ENCODE measurements at regions of chr14 and their contacts with region 1.

Region 1: DNA sequence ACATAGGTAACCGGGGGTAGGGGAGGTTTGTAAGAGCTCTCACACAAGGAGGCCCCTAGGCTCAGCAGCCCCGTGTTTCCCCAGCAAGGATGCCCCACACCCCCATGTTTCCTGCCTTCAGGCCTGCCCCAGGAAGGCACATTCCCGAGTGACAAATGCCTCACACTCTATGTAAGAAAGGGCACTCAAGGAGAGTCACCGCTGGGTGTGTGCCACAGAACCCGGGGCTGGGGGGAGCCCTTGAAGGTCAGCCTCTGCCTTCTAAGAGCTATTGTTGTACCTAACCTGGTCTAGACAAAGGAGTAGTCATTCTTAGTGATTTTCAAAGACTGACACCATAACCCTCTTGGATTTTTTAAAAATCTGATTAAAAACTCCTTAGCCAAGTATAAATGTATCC is 333.6 kb downstream of the DPF3 start:
- DNase-seq: no peak
- ATAC-seq: no peak
- H3K4me3 Mint-ChIP-seq: no peak overlapping the region
- H3K27ac Mint-ChIP-seq: no peak overlapping the region
- H3K4me1 Mint-ChIP-seq: peaks cover 37% of the 10 kb centered on the region
- H3K27me3 Mint-ChIP-seq: no peaks in the 10 kb centered on the region
- CTCF ChIP-seq: no peak

Region 2: GRCh38 chr14:72535485-72535884 is 24.8 kb before region 1 on chr14:
- CTCF ChIA-PET with region 1: no interaction called
- POLR2A ChIA-PET with region 1: no interaction called
- intact Hi-C with region 1: no loop called
- DNase-seq: no peak
- ATAC-seq: peak; percentile 90
- H3K4me3 Mint-ChIP-seq: peak overlapping the region; percentile 49
- H3K27ac Mint-ChIP-seq: peak overlapping the region; percentile 2
- H3K4me1 Mint-ChIP-seq: peaks cover 85% of the 10 kb centered on the region
- H3K27me3 Mint-ChIP-seq: no peaks in the 10 kb centered on the region
- CTCF ChIP-seq: no peak

Region 3: DNA sequence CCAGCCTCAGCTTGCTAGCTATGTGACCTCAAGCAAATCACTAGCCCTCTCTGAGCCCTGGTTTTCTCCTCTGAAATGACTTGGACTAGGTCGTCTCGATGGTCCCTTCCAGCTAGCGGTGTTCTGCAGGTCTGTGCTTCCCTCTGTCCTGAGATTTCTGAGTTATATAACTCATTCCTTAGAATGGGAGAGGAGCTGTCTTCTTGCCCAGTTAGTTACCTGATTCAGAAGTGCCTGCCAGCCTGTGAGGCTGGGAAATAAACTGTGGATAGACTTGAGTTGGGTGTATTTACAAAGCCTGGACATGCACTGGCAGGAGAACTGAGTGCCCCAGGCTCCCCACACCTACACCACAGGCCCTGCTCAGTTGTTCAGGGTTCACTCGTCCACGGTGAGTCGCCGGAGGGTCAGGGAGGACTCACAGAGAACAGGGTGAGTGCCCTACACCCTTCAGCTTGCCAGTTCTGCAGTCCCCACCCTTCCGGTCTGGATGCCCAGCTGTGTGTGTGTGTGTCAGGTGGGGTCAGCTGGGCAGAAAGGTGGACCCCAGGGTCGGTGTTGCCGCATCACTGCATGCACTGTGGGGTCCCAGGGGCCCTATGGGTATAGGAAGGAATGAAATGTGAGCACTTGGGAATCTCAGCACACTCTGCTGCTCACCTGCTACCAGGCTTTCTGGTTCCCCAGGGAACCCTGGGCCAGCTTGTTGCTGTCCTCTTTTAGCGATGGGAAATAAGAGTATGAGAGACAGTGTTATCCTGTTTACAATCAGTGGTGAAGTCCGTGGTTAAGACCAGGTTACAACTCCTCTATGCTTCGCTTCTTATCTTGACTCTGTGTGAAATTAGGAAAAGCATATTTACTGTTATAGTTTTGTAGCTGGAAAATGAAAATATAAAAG is 14.7 kb before region 1 on chr14:
- CTCF ChIA-PET with region 1: no interaction called
- POLR2A ChIA-PET with region 1: no interaction called
- intact Hi-C with region 1: loop called (anchors 2 kb)
- DNase-seq: no peak
- ATAC-seq: peak; percentile 71
- H3K4me3 Mint-ChIP-seq: peak overlapping the region; percentile 57
- H3K27ac Mint-ChIP-seq: peak overlapping the region; percentile 72
- H3K4me1 Mint-ChIP-seq: peaks cover 56% of the 10 kb centered on the region
- H3K27me3 Mint-ChIP-seq: no peaks in the 10 kb centered on the region
- CTCF ChIP-seq: no peak